ENCODE measurements at regions of chr6 and their contacts with region 1.

Region 1: GRCh38 chr6:139364302-139364981 is 10.0 kb downstream of the CITED2 start:
- DNase-seq: peak; percentile 45
- H3K4me3 ChIP-seq: no peak overlapping the region; a peak in 1 of 4 replicates
- H3K27ac ChIP-seq: no peak overlapping the region
- H3K4me1 ChIP-seq: peaks cover 0 to 19% of the 10 kb centered on the region in 2 experiments; a peak in 3 of 4 replicates
- H3K27me3 ChIP-seq: no peaks in the 10 kb centered on the region
- CTCF ChIP-seq: peak; percentile 72
- EP300 ChIP-seq: no peak
- RAD21 ChIP-seq: peak; percentile 85

Region 2: DNA sequence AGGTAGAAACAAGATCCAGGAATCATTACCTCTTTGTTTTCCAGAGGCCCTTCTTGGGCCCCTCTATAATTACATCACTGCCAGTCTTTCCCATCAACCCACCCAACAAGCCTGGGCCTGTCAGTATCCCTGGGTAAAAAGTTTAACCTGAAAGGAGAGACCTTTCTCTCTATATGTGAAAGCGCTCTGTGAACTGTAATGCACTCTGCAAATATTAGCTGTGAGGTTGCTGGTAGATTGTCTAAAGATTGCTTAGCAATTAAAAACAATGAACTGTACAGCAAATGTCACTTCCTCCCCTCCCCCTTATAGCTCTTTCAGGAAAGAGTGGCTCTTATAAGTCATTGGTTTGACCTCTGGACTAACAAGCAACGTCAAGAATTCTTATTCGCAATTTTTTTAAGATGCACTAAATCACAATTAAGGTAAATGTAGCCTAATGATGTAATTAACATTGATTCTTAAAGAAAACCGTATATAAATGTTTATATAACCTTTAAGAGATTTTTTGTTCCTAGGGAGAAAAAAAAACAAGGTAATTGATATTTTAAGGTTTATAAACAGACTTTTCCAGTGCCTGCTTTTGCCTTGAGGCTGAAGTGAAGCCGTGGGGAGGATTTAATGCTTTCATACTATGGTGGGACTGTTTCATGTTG is 550.1 kb before region 1 on chr6:
- CTCF ChIA-PET with region 1: interaction called, 30 read pairs
- POLR2A ChIA-PET with region 1: no interaction called
- DNase-seq: no peak
- H3K4me3 ChIP-seq: no peak overlapping the region
- H3K27ac ChIP-seq: no peak overlapping the region
- H3K4me1 ChIP-seq: no peaks in the 10 kb centered on the region; a peak in 1 of 4 replicates
- H3K27me3 ChIP-seq: no peaks in the 10 kb centered on the region
- CTCF ChIP-seq: no peak
- EP300 ChIP-seq: no peak
- RAD21 ChIP-seq: no peak

Region 3: DNA sequence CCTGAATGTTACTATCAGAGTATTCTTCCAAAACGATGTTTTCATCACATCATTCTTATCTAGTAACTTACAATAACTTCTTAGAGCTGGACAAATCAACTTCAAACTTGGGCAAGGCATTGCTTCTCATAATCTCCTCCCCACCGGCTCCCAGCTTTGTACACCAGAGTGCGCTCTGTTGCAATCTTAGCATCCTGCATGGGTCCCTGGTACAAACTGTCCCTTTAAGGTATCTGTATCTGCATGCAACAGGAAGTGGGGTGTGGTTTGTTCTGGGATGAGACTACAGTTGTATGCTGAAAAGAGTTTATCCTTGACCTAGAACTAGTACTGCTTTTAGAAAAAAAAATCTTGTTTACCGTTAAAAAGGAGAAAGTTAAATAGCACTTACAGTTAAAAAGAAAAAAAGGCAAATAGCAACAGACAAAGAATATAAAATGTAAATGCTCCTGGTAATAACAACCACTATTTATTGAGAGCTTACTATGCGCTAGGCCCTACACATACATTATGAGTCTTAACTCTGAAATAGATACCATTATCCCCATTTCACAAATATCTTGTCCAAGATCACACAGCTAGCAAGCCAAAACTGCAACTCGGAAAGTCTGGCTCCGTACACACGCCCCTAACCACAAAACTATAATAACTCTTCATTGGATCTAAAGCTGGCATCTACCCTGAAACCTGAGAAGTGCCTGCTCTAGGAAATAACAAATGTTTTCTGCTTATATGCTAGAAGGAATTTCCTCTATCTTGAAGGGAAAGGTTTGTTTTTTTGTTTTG is 239.4 kb before region 1 on chr6:
- CTCF ChIA-PET with region 1: interaction called, 10 read pairs
- POLR2A ChIA-PET with region 1: no interaction called
- DNase-seq: peak; percentile 39
- H3K4me3 ChIP-seq: no peak overlapping the region
- H3K27ac ChIP-seq: no peak overlapping the region
- H3K4me1 ChIP-seq: no peaks in the 10 kb centered on the region; a peak in 1 of 4 replicates
- H3K27me3 ChIP-seq: no peaks in the 10 kb centered on the region
- CTCF ChIP-seq: peak; percentile 49
- EP300 ChIP-seq: no peak
- RAD21 ChIP-seq: peak; percentile 62

Region 4: DNA sequence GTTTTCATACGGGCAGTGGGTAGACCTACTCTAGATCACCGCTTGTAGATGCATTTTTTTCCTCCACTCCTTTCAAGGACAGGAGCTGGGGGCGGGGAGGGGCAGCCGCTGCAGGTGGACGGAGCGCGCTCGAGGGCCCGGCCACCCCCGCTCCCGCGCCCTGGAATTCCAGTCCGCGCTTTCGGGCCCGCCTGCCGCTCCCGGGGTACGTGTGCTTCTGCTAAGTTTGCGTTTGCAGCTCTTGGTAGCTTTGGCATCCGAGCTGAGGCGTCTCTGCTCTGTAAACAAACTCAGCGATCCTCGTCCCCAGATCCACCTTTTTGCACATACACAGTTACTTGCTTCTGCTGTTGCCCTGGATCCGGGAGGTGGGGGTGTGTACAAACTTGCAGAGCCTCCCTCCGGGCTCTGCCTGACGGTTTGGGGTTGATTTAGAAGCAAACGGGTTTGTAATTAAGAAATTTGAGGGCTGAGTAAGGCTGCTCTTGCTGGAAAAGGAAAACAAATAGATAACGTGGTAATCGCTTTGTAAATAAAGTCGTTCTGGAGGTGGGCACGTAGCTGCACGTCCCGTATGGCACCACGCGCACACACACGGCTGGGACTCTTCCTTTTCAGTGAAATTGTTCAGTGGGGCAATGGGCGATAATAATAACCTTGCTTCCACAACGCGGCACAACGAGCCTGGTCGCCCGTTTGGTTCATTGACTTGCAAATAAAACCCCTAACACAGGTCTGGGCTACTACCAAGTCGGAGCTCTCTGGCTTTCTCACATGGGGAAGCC is 11.0 kb after region 1 on chr6:
- CTCF ChIA-PET with region 1: interaction called, 20 read pairs
- POLR2A ChIA-PET with region 1: no interaction called
- DNase-seq: peak; percentile 79
- H3K4me3 ChIP-seq: peak overlapping the region; percentile 72 to 95
- H3K27ac ChIP-seq: peak overlapping the region; percentile 82 to 91
- H3K4me1 ChIP-seq: peaks cover 12 to 18% of the 10 kb centered on the region in 2 experiments; a peak in 2 of 4 replicates
- H3K27me3 ChIP-seq: no peaks in the 10 kb centered on the region
- CTCF ChIP-seq: peak; percentile 15; the same call in 1 of the 2 replicates
- EP300 ChIP-seq: peak in 1 of 2 experiments; percentile 8; a peak in 1 of 4 replicates
- RAD21 ChIP-seq: no peak

Region 5: GRCh38 chr6:139490482-139490881 is 126.0 kb after region 1 on chr6:
- CTCF ChIA-PET with region 1: no interaction called
- POLR2A ChIA-PET with region 1: no interaction called
- DNase-seq: no peak
- H3K4me3 ChIP-seq: no peak overlapping the region
- H3K27ac ChIP-seq: no peak overlapping the region
- H3K4me1 ChIP-seq: no peaks in the 10 kb centered on the region
- H3K27me3 ChIP-seq: no peaks in the 10 kb centered on the region
- CTCF ChIP-seq: no peak
- EP300 ChIP-seq: no peak
- RAD21 ChIP-seq: no peak